ENCODE measurements at regions of chr2 and their contacts with region 1.

Region 1: GRCh38 chr2:20242060-20243006 is 17.4 kb upstream of the SDC1 start:
- DNase-seq: peak; percentile 74
- ATAC-seq: peak; percentile 73
- H3K4me3 Mint-ChIP-seq: peak overlapping the region; percentile 31
- H3K27ac Mint-ChIP-seq: no peak overlapping the region
- H3K4me1 Mint-ChIP-seq: peaks cover 14% of the 10 kb centered on the region
- H3K27me3 Mint-ChIP-seq: no peaks in the 10 kb centered on the region; the same call in 1 of the 2 replicates
- CTCF ChIP-seq: peak; percentile 93

Region 2: DNA sequence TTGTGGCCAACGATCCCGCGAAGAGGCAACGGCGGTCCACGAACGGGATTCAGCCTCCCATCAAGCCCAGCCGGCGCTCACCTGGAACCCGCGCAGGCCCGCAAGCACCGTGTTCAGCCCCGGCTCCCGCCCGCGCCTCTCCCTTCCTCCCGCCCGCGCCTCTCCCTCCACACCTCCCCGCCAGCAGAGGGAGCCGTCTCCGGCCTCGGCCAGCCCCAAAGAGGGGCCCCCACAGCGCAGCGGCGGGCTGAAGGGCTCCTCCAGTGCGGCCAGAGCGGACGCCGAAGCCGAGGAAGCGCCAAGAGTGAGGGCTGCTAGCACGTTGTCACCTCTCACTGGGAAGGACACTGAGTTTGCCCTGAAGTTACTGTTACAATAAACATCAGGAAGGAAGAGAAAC is 135.6 kb before region 1 on chr2:
- CTCF ChIA-PET with region 1: interaction called, 22 read pairs
- POLR2A ChIA-PET with region 1: no interaction called
- DNase-seq: peak; percentile 91
- ATAC-seq: peak; percentile 92
- H3K4me3 Mint-ChIP-seq: peak overlapping the region; percentile 64
- H3K27ac Mint-ChIP-seq: no peak overlapping the region
- H3K4me1 Mint-ChIP-seq: peaks cover 7% of the 10 kb centered on the region
- H3K27me3 Mint-ChIP-seq: peaks cover 43% of the 10 kb centered on the region
- CTCF ChIP-seq: peak; percentile 55

Region 3: DNA sequence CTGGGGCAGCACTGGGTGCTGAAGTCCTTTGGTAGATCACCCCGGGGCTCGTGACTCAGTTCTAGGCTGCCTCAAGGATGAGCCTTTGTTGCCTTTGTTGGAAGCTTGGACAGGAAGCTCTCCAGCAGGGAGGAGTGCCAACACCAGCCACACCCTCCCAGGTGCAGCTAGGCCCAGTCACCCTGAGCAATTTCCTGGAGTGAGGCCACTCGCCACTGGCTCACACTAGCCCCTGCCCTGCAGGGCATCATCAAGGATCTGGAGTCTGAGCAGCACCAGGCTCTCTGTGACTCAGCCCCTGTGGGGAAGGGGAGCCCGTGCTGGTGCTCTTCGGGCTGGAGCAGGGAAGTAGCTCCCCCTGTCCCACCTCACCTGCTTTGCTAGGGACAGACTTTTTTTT is 10.7 kb before region 1 on chr2:
- CTCF ChIA-PET with region 1: interaction called, 48 read pairs
- POLR2A ChIA-PET with region 1: no interaction called
- DNase-seq: peak; percentile 37
- ATAC-seq: peak; percentile 90
- H3K4me3 Mint-ChIP-seq: no peak overlapping the region
- H3K27ac Mint-ChIP-seq: no peak overlapping the region
- H3K4me1 Mint-ChIP-seq: peaks cover 20% of the 10 kb centered on the region
- H3K27me3 Mint-ChIP-seq: peaks cover 7% of the 10 kb centered on the region; the same call in 1 of the 2 replicates
- CTCF ChIP-seq: no peak

Region 4: DNA sequence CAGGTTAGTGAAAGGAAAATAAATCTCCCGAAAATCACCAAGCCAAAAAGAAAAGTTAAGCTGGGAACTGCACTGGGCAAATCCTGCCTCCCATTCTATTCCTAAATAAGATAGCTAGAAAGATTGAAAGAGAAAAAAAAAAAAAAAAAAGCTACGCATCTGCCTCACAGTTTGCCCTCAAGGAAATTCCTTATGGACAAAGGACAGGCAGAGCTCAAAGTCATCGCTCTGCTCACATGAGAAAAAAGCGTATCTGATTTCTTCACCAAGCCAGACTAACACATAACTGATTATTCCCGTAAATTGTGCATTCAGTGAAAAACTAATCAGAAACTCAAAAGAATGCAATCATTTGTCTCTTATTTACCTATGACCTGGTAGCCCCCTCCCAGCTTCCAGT is 58.3 kb after region 1 on chr2:
- CTCF ChIA-PET with region 1: interaction called, 12 read pairs
- POLR2A ChIA-PET with region 1: no interaction called
- DNase-seq: no peak
- ATAC-seq: no peak
- H3K4me3 Mint-ChIP-seq: no peak overlapping the region
- H3K27ac Mint-ChIP-seq: peak overlapping the region; percentile 82
- H3K4me1 Mint-ChIP-seq: peaks cover 7% of the 10 kb centered on the region; the same call in 1 of the 2 replicates
- H3K27me3 Mint-ChIP-seq: no peaks in the 10 kb centered on the region
- CTCF ChIP-seq: no peak

Measured in WTC11 (cell line).